Activated CD8-positive, alpha-beta T cell treated with anti-CD3 and anti-CD28 coated beads, Interleukin-2, amount 10 ng/mL, durations not matched to agents 7 days and 5 days (primary cell): ENCODE measurements at regions of chr2 and their contacts with region 1.

Region 1: DNA sequence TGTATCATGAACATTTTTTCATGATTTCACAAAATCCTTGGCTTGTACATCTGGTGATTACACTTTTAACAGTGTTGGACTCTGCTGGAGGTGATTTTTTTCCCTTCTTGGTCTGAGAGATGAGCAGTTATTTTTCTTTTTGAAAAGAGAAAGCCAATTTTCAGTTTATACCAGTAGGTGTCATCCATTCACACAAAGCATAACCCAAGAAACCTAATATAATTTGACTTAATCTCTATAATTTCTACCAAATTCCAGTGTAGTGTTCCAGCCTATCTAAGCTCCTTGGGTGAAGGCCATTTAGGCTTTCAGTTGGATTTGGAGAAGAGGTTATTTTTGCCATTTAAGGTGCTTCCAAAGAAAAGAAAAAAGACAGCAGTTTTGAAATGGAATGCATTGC is 7.7 kb upstream of the ICOS start:
- DNase-seq: no peak
- ATAC-seq: peak; percentile 26
- H3K4me3 Mint-ChIP-seq: no peak overlapping the region
- H3K27ac Mint-ChIP-seq: no peak overlapping the region
- H3K4me1 Mint-ChIP-seq: peaks cover 15% of the 10 kb centered on the region
- H3K27me3 Mint-ChIP-seq: peaks cover 6% of the 10 kb centered on the region

Region 2: GRCh38 chr2:203918264-203918663 is 10.6 kb before region 1 on chr2:
- CTCF ChIA-PET with region 1: interaction called, 16 read pairs
- POLR2A ChIA-PET with region 1: interaction called, 3 read pairs
- DNase-seq: no peak
- ATAC-seq: no peak
- H3K4me3 Mint-ChIP-seq: no peak overlapping the region
- H3K27ac Mint-ChIP-seq: no peak overlapping the region
- H3K4me1 Mint-ChIP-seq: peaks cover 18% of the 10 kb centered on the region
- H3K27me3 Mint-ChIP-seq: peaks cover 20% of the 10 kb centered on the region